ENCODE measurements at regions of chr2 and their contacts with region 1.

Region 1: GRCh38 chr2:27010139-27010538 is 22.6 kb upstream of the TMEM214 start:
- H3K4me3 ChIP-seq: no peak overlapping the region
- H3K27ac ChIP-seq: no peak overlapping the region
- H3K4me1 ChIP-seq: peaks cover 3% of the 10 kb centered on the region; the same call in 1 of the 2 replicates
- CTCF ChIP-seq: no peak

Region 2: GRCh38 chr2:26964446-26965130 is 45.6 kb before region 1 on chr2:
- CTCF ChIA-PET with region 1: interaction called, 307 read pairs
- POLR2A ChIA-PET with region 1: no interaction called
- H3K4me3 ChIP-seq: no peak overlapping the region
- H3K27ac ChIP-seq: no peak overlapping the region
- H3K4me1 ChIP-seq: no peaks in the 10 kb centered on the region
- CTCF ChIP-seq: no peak

Region 3: DNA sequence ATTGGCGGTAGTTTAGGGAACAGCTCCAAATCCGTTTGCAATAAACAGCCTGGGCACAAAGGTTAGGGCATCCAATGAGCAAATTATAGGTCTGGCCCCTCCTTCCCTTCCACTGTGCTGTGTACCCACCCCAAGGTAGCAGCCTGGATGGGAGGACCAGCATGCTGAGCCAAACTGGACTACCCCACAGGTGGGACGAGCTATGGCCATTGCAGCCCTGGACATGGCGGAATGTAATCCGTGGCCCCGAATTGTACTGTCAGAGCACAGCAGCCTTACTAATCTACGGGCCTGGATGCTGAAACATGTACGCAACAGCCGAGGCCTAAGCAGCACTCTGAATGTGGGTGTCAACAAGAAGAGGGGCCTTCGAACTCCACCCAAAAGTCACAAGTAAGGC is 48.1 kb after region 1 on chr2:
- CTCF ChIA-PET with region 1: no interaction called
- POLR2A ChIA-PET with region 1: no interaction called
- H3K4me3 ChIP-seq: no peak overlapping the region
- H3K27ac ChIP-seq: no peak overlapping the region; the same call in 1 of the 2 replicates
- H3K4me1 ChIP-seq: no peaks in the 10 kb centered on the region
- CTCF ChIP-seq: no peak